SK-N-SH (cell line): ENCODE measurements at regions of chr16 and their contacts with region 1.

Region 1: GRCh38 chr16:76653390-76654026 is 376.3 kb downstream of the CNTNAP4 start:
- DNase-seq: peak; percentile 39
- H3K4me3 ChIP-seq: no peak overlapping the region; a peak in 1 of 4 replicates
- H3K27ac ChIP-seq: peak overlapping the region in 1 of 2 experiments; percentile 28; a peak in 1 of 4 replicates
- H3K4me1 ChIP-seq: peaks cover 0 to 16% of the 10 kb centered on the region in 2 experiments; a peak in 2 of 4 replicates
- H3K27me3 ChIP-seq: no peaks in the 10 kb centered on the region
- CTCF ChIP-seq: peak; percentile 64
- EP300 ChIP-seq: peak in 1 of 2 experiments; percentile 67; a peak in 2 of 4 replicates
- RAD21 ChIP-seq: peak; percentile 94

Region 2: GRCh38 chr16:75787440-75787839 is 866.1 kb before region 1 on chr16:
- CTCF ChIA-PET with region 1: interaction called, 12 read pairs
- POLR2A ChIA-PET with region 1: no interaction called
- DNase-seq: no peak
- H3K4me3 ChIP-seq: no peak overlapping the region
- H3K27ac ChIP-seq: no peak overlapping the region
- H3K4me1 ChIP-seq: no peaks in the 10 kb centered on the region; a peak in 1 of 4 replicates
- H3K27me3 ChIP-seq: no peaks in the 10 kb centered on the region
- CTCF ChIP-seq: no peak
- EP300 ChIP-seq: no peak
- RAD21 ChIP-seq: no peak

Region 3: DNA sequence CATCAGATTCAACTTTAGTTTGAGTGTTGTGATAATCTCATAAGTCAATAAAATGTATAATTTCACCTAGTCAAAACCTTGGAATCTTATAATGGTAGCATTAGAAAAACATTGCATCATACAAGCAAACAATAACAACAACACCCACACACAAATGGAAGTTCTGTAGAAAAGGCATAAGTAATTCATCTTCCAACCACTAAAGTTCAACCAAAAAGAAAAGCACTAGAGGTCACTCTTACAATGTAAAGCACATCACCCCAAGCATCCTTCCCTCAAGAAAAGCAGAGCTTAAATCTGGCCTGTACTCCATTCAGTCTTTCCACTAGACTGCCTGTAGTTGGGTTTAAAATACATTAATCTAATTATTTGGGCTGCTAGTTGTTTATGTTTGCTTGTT is 374.5 kb before region 1 on chr16:
- CTCF ChIA-PET with region 1: interaction called, 67 read pairs
- POLR2A ChIA-PET with region 1: interaction called, 6 read pairs
- DNase-seq: peak; percentile 21
- H3K4me3 ChIP-seq: no peak overlapping the region; a peak in 1 of 4 replicates
- H3K27ac ChIP-seq: no peak overlapping the region; a peak in 1 of 4 replicates
- H3K4me1 ChIP-seq: no peaks in the 10 kb centered on the region; a peak in 2 of 4 replicates
- H3K27me3 ChIP-seq: no peaks in the 10 kb centered on the region
- CTCF ChIP-seq: peak; percentile 23; the same call in 1 of the 2 replicates
- EP300 ChIP-seq: no peak
- RAD21 ChIP-seq: peak; percentile 85

Region 4: DNA sequence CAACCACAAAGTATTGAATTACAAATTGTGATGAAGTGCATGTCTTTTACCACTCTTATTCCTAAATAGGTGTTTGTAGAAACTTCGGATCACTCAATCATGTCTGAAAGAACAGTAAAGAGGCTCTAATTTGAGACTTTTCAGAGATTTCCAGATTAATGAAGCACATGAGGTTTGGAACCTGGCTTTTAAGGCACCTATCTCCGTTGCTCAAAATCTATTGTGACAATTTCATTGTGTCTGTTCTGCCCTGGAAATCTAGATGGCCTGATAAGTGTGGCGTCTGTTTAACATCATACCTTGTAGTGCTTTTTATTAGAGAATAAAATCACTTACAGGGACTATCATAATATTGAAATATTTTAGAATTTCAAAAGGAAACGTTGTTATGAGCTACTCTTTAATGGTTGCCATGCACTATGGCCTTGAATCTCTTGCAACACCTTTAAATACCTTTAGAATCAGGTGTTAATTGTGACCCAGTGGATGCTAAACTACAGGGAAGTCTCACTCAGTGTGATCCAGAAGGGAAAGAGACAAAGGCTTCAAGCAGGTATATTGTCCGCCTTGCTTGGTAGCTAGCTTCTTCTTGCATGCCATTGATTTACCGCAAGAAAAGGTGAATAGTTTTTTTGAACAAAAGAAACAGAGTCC is 166.0 kb before region 1 on chr16:
- CTCF ChIA-PET with region 1: interaction called, 11 read pairs
- POLR2A ChIA-PET with region 1: interaction called, 4 read pairs
- DNase-seq: peak; percentile 32
- H3K4me3 ChIP-seq: no peak overlapping the region
- H3K27ac ChIP-seq: peak overlapping the region in 1 of 2 experiments; percentile 91; a peak in 2 of 4 replicates
- H3K4me1 ChIP-seq: peaks cover 0 to 25% of the 10 kb centered on the region in 2 experiments; a peak in 2 of 4 replicates
- H3K27me3 ChIP-seq: no peaks in the 10 kb centered on the region
- CTCF ChIP-seq: no peak
- EP300 ChIP-seq: peak in 1 of 2 experiments; percentile 95; a peak in 2 of 4 replicates
- RAD21 ChIP-seq: no peak

Region 5: GRCh38 chr16:76768948-76769347 is 115.4 kb after region 1 on chr16:
- CTCF ChIA-PET with region 1: no interaction called
- POLR2A ChIA-PET with region 1: no interaction called
- DNase-seq: no peak
- H3K4me3 ChIP-seq: no peak overlapping the region
- H3K27ac ChIP-seq: no peak overlapping the region
- H3K4me1 ChIP-seq: no peaks in the 10 kb centered on the region
- H3K27me3 ChIP-seq: no peaks in the 10 kb centered on the region
- CTCF ChIP-seq: no peak
- EP300 ChIP-seq: no peak
- RAD21 ChIP-seq: no peak

Region 6: GRCh38 chr16:76800196-76800595 is 146.7 kb after region 1 on chr16:
- CTCF ChIA-PET with region 1: no interaction called
- POLR2A ChIA-PET with region 1: no interaction called
- DNase-seq: no peak
- H3K4me3 ChIP-seq: no peak overlapping the region
- H3K27ac ChIP-seq: no peak overlapping the region
- H3K4me1 ChIP-seq: no peaks in the 10 kb centered on the region
- H3K27me3 ChIP-seq: no peaks in the 10 kb centered on the region
- CTCF ChIP-seq: no peak
- EP300 ChIP-seq: no peak
- RAD21 ChIP-seq: no peak

Region 7: DNA sequence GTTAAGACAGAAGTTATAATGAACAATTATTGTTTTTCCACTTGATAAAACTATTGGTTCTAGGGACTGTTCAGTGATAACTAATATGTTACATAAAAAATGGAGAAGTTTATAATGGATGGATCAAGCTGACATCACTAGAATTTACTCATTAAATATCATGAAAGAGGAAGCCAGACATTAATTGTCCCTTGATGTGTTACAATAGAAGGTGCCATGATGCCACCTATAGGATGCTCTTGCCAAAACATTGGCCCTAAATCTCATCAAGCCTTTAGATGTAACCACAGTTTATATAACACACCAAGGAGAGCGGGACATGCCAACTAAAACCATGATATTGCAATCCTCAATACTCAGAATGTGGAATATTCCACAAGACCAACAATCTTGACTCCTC is 389.6 kb after region 1 on chr16:
- CTCF ChIA-PET with region 1: interaction called, 11 read pairs
- POLR2A ChIA-PET with region 1: no interaction called
- DNase-seq: peak; percentile 39
- H3K4me3 ChIP-seq: no peak overlapping the region
- H3K27ac ChIP-seq: no peak overlapping the region
- H3K4me1 ChIP-seq: no peaks in the 10 kb centered on the region; a peak in 1 of 4 replicates
- H3K27me3 ChIP-seq: no peaks in the 10 kb centered on the region
- CTCF ChIP-seq: peak; percentile 59
- EP300 ChIP-seq: no peak
- RAD21 ChIP-seq: peak; percentile 84